ENCODE measurements at regions of chr6 and their contacts with region 1.

Region 1: DNA sequence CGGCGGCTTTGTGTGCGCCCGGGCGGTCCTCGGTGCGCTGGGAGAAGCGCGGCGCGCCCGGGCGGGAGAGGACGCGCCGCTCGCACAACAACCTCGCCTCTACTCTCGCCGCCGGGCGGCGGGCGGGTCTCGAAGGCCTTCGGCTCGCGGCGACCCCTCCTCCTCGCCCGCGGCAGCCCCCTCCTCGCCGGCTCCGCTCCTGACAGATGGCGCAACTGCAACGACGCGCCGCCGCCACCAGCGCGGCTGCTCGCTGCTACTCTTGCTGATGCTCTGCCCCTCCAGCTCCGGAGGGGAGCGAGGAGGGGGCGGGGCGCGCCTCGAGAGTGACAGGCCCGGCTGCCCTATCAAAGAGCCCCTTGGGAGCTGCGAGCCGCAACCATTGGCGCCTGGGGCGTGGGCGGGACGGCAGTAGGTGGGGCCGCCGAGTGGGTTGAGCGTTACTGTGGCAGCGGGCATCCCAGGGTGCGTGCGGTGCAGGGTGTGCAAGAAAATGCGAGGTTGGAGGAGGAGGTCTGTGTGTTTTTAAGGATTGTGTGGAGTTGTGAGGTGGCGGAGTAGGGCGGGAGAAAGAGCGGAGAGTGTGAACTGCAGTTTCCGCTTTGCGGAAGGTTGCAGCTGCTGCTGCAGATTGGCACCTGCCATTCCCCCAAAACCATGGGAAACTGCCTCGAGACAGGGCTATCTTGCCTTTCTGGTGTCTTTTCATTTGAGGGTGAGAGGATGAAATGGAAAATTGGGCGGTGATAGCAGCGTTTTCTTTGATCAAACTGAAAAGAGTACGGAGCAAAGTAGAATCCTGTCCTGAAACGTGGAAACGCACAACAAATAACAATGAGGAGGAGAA is at the start of gene FYN:
- DNase-seq: peak; percentile 99
- H3K4me3 Mint-ChIP-seq: peak within 1 kb of the TSS; percentile 96
- H3K27ac Mint-ChIP-seq: peak within 1 kb of the TSS; percentile 97
- H3K4me1 Mint-ChIP-seq: peaks cover 32% of the 10 kb centered on the region
- H3K27me3 Mint-ChIP-seq: no peaks in the 10 kb centered on the region
- total RNA-seq, gene FYN: 236 to 244 TPM

Region 2: GRCh38 chr6:110815217-110816109 is 1057.9 kb before region 1 on chr6 and contains the start of gene CDK19:
- CTCF ChIA-PET with region 1: no interaction called
- intact Hi-C with region 1: loop called (anchors 5 kb)
- DNase-seq: peak; percentile 99
- H3K4me3 Mint-ChIP-seq: peak within 1 kb of the TSS; percentile 100
- H3K27ac Mint-ChIP-seq: peak within 1 kb of the TSS; percentile 95
- H3K4me1 Mint-ChIP-seq: peaks cover 19% of the 10 kb centered on the region
- H3K27me3 Mint-ChIP-seq: no peaks in the 10 kb centered on the region
- total RNA-seq, gene CDK19: 11.0 to 11.7 TPM

Region 3: DNA sequence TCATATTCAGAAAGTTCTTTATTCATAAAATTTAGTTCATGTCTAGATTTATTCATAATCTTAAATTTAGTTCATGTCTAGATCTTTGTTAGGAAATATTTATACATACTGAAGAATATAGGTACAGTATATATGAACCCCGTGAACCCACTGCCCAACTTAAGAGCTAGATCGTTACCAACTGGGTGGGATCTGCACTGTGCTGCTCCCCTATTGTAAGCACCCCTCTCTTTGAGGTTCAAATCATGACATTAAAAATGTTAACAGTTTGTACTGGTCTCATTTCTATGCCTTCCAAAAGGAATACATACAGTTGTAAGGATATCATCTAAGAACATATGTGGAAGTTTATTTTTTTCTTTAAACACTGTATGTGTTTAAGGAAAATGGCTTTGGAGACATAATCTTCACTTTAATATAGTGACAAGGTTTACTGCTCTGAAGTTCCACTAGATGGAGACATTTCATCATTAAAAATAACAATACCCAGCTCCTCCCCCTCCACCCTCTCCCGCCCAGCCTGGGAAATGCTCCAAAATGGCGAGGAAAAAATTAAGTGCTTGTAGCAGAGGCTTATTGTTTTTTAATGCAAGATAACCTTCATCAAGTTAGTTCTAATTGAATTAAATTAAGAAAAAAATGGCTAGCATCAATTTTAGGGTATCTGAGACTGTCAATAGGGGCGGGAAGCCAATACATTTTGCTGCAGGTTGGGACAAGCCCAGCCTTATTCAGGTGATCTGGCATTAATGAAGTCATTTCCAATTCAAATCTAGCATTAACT is 163.6 kb before region 1 on chr6:
- CTCF ChIA-PET with region 1: interaction called, 7 read pairs
- intact Hi-C with region 1: loop called (anchors 1 kb)
- DNase-seq: peak; percentile 73
- H3K4me3 Mint-ChIP-seq: no peak overlapping the region
- H3K27ac Mint-ChIP-seq: peak overlapping the region; percentile 82
- H3K4me1 Mint-ChIP-seq: peaks cover 53% of the 10 kb centered on the region
- H3K27me3 Mint-ChIP-seq: no peaks in the 10 kb centered on the region

Region 4: GRCh38 chr6:111804627-111805235 is 68.7 kb before region 1 on chr6:
- CTCF ChIA-PET with region 1: interaction called, 4 read pairs
- intact Hi-C with region 1: loop called (anchors 1 kb)
- DNase-seq: peak; percentile 74
- H3K4me3 Mint-ChIP-seq: peak overlapping the region; percentile 5
- H3K27ac Mint-ChIP-seq: peak overlapping the region; percentile 92
- H3K4me1 Mint-ChIP-seq: peaks cover 92% of the 10 kb centered on the region
- H3K27me3 Mint-ChIP-seq: no peaks in the 10 kb centered on the region

Region 5: DNA sequence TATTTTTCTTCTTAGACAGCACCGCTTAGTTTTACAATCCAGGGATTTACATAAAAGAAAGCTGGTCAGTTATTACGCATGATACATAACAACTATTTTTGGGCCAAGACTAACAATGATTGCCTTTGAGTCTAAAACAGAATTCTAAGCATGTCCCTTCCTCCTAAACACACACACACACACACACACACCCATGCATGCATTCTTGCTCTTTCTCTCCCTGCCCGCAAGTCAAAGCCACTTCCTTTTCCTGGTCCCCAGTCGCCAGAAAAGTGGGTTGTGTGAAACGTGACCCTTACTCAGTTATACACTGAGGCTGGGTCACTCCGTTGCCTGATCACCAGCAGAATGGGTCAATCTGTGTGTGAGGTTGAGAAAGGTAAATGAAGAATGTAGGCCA is 31.6 kb before region 1 on chr6:
- CTCF ChIA-PET with region 1: interaction called, 4 read pairs
- intact Hi-C with region 1: loop called (anchors 1 kb)
- DNase-seq: peak; percentile 70
- H3K4me3 Mint-ChIP-seq: no peak overlapping the region
- H3K27ac Mint-ChIP-seq: no peak overlapping the region
- H3K4me1 Mint-ChIP-seq: peaks cover 36% of the 10 kb centered on the region
- H3K27me3 Mint-ChIP-seq: no peaks in the 10 kb centered on the region

Region 6: GRCh38 chr6:111985202-111985731 is 111.9 kb after region 1 on chr6:
- CTCF ChIA-PET with region 1: interaction called, 3 read pairs
- intact Hi-C with region 1: loop called (anchors 1 kb)
- DNase-seq: peak; percentile 76
- H3K4me3 Mint-ChIP-seq: peak overlapping the region; percentile 9
- H3K27ac Mint-ChIP-seq: peak overlapping the region; percentile 94
- H3K4me1 Mint-ChIP-seq: peaks cover 87% of the 10 kb centered on the region
- H3K27me3 Mint-ChIP-seq: no peaks in the 10 kb centered on the region

Measured in activated naive CD4-positive, alpha-beta T cell treated with anti-CD3 and anti-CD28 coated beads for 36 hours (primary cell).